CD4-positive, alpha-beta T cell (primary cell): ENCODE measurements at regions of chr5 and their contacts with region 1.

Region 1: DNA sequence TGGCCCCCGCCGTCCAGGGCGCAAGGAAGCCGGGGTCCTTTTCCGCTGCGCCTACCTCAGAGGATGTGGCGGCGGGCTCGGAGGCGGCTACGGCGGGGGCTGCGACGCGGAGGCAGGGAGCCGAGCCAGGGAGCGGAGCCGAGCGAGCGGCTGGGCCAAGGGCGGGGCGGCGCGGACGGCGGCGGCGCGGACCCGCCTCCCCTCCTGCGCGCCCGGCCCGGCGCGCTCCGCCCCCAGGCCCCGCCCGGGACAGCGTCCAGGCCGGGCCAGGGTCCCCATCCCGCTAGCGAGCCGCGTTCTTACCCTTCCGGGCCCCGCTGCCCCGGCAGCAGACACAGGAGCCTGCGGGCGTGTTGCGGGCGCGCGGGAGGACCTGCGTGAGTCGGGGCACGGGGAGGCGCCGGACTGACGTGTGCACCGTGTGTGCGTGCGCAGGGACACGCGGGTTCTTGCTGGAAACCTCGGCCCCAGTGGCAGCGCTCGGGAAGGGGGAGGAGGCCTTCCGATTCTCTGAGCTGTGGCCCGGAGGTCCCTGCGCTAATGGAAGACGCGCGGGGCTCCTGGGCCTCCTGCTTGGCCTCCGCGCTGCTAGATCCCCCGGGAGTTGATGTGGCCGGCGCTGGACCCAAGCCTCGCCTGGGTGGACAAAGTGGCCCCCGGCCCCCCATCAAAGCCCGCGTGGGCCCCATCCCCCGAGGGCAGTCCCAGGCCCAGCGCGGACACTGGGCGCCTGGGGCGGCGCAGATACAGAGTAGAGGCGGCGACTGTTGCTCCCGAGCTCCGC is at the start of gene VDAC1:
- DNase-seq: peak; percentile 69 to 97 (median 80)
- ATAC-seq: peak; percentile 82
- H3K4me3 ChIP-seq: peak within 1 kb of the TSS; percentile 85
- H3K4me3 Mint-ChIP-seq: peak within 1 kb of the TSS; percentile 99
- H3K27ac ChIP-seq: peak within 1 kb of the TSS; percentile 77 to 91
- H3K27ac Mint-ChIP-seq: peak within 1 kb of the TSS; percentile 97
- H3K4me1 ChIP-seq: peaks cover 54% of the 10 kb centered on the region
- H3K4me1 Mint-ChIP-seq: peaks cover 48% of the 10 kb centered on the region
- H3K27me3 ChIP-seq: no peaks in the 10 kb centered on the region
- H3K27me3 Mint-ChIP-seq: no peaks in the 10 kb centered on the region
- CTCF ChIP-seq: no peak
- total RNA-seq, gene VDAC1: 46.8 to 50.9 TPM

Region 2: GRCh38 chr5:133968049-133968980 is 36.5 kb before region 1 on chr5 and contains the start of gene C5orf15:
- CTCF ChIA-PET with region 1: no interaction called
- POLR2A ChIA-PET with region 1: interaction called, 3 read pairs
- intact Hi-C with region 1: loop called (anchors 2 kb)
- DNase-seq: peak; percentile 74 to 98 (median 89)
- ATAC-seq: peak; percentile 91
- H3K4me3 ChIP-seq: peak within 1 kb of the TSS; percentile 95
- H3K4me3 Mint-ChIP-seq: peak within 1 kb of the TSS; percentile 94
- H3K27ac ChIP-seq: peak within 1 kb of the TSS; percentile 82 to 86
- H3K27ac Mint-ChIP-seq: peak within 1 kb of the TSS; percentile 98
- H3K4me1 ChIP-seq: peaks cover 20% of the 10 kb centered on the region
- H3K4me1 Mint-ChIP-seq: peaks cover 57% of the 10 kb centered on the region
- H3K27me3 ChIP-seq: no peaks in the 10 kb centered on the region
- H3K27me3 Mint-ChIP-seq: no peaks in the 10 kb centered on the region
- CTCF ChIP-seq: no peak
- total RNA-seq, gene C5orf15: 12.3 to 15.5 TPM

Region 3: GRCh38 chr5:134153657-134154056 is 148.9 kb after region 1 on chr5:
- CTCF ChIA-PET with region 1: no interaction called
- POLR2A ChIA-PET with region 1: interaction called, 22 read pairs
- intact Hi-C with region 1: no loop called
- DNase-seq: no peak
- ATAC-seq: no peak
- H3K4me3 ChIP-seq: no peak overlapping the region
- H3K4me3 Mint-ChIP-seq: no peak overlapping the region
- H3K27ac ChIP-seq: no peak overlapping the region
- H3K27ac Mint-ChIP-seq: peak overlapping the region; percentile 89
- H3K4me1 ChIP-seq: peaks cover 37% of the 10 kb centered on the region
- H3K4me1 Mint-ChIP-seq: peaks cover 92% of the 10 kb centered on the region
- H3K27me3 ChIP-seq: no peaks in the 10 kb centered on the region
- H3K27me3 Mint-ChIP-seq: no peaks in the 10 kb centered on the region
- CTCF ChIP-seq: no peak

Region 4: GRCh38 chr5:134176511-134177368 is 172.0 kb after region 1 on chr5 and contains the start of gene SKP1:
- CTCF ChIA-PET with region 1: no interaction called
- POLR2A ChIA-PET with region 1: interaction called, 18 read pairs
- intact Hi-C with region 1: no loop called
- DNase-seq: peak; percentile 76 to 94 (median 86)
- ATAC-seq: peak; percentile 83
- H3K4me3 ChIP-seq: peak within 1 kb of the TSS; percentile 98
- H3K4me3 Mint-ChIP-seq: peak within 1 kb of the TSS; percentile 97
- H3K27ac ChIP-seq: peak within 1 kb of the TSS; percentile 98 to 99
- H3K27ac Mint-ChIP-seq: peak within 1 kb of the TSS; percentile 98
- H3K4me1 ChIP-seq: peaks cover 19% of the 10 kb centered on the region
- H3K4me1 Mint-ChIP-seq: peaks cover 36% of the 10 kb centered on the region
- H3K27me3 ChIP-seq: no peaks in the 10 kb centered on the region
- H3K27me3 Mint-ChIP-seq: no peaks in the 10 kb centered on the region
- CTCF ChIP-seq: no peak
- total RNA-seq, gene SKP1: 303 to 314 TPM

Region 5: GRCh38 chr5:134365604-134366003 is 360.8 kb after region 1 on chr5:
- CTCF ChIA-PET with region 1: no interaction called
- POLR2A ChIA-PET with region 1: no interaction called
- intact Hi-C with region 1: loop called in 1 of 2 experiments (anchors 5 kb)
- DNase-seq: no peak
- ATAC-seq: no peak
- H3K4me3 ChIP-seq: no peak overlapping the region
- H3K4me3 Mint-ChIP-seq: peak overlapping the region; percentile 14
- H3K27ac ChIP-seq: no peak overlapping the region
- H3K27ac Mint-ChIP-seq: no peak overlapping the region
- H3K4me1 ChIP-seq: peaks cover 22% of the 10 kb centered on the region
- H3K4me1 Mint-ChIP-seq: peaks cover 26% of the 10 kb centered on the region
- H3K27me3 ChIP-seq: no peaks in the 10 kb centered on the region
- H3K27me3 Mint-ChIP-seq: no peaks in the 10 kb centered on the region
- CTCF ChIP-seq: no peak

Region 6: GRCh38 chr5:134874831-134875655 is 870.3 kb after region 1 on chr5:
- CTCF ChIA-PET with region 1: no interaction called
- POLR2A ChIA-PET with region 1: no interaction called
- intact Hi-C with region 1: no loop called
- DNase-seq: peak in 12 of 14 experiments; percentile 1 to 58 (median 13)
- ATAC-seq: peak; percentile 24
- H3K4me3 ChIP-seq: peak overlapping the region; percentile 68
- H3K4me3 Mint-ChIP-seq: peak overlapping the region; percentile 96
- H3K27ac ChIP-seq: peak overlapping the region; percentile 87 to 88
- H3K27ac Mint-ChIP-seq: peak overlapping the region; percentile 93
- H3K4me1 ChIP-seq: peaks cover 39% of the 10 kb centered on the region
- H3K4me1 Mint-ChIP-seq: peaks cover 48% of the 10 kb centered on the region
- H3K27me3 ChIP-seq: no peaks in the 10 kb centered on the region
- H3K27me3 Mint-ChIP-seq: no peaks in the 10 kb centered on the region
- CTCF ChIP-seq: no peak